A673 (cell line): ENCODE measurements at regions of chr19 and their contacts with region 1.

Region 1: GRCh38 chr19:1665565-1666047 is 13.2 kb upstream of the TCF3 start:
- DNase-seq: no peak
- H3K4me3 ChIP-seq: no peak overlapping the region
- H3K27ac ChIP-seq: no peak overlapping the region
- H3K4me1 ChIP-seq: peaks cover 21% of the 10 kb centered on the region
- H3K27me3 ChIP-seq: no peaks in the 10 kb centered on the region
- CTCF ChIP-seq: no peak

Region 2: DNA sequence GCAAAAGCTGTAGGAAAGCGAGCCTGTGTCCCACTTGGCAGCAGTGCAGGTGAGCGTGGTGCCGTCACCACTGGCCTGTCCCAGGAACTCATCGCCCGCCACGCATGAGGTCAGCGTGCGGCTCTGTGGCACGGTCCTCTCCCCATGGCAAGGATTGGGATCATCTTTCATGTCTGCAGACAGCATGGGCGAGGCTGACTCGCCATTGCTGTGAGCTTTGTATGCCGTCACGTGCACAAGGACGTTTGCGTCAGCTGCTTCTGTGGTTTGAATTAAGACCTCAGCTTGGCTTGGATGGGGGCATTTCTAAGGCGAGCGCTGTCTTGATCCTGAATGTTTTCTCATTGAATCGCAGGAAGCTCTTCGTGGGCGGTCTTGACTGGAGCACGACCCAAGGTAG is 248.5 kb before region 1 on chr19:
- CTCF ChIA-PET with region 1: no interaction called
- POLR2A ChIA-PET with region 1: no interaction called
- intact Hi-C with region 1: no loop called
- DNase-seq: no peak
- H3K4me3 ChIP-seq: no peak overlapping the region
- H3K27ac ChIP-seq: peak overlapping the region; percentile 89
- H3K4me1 ChIP-seq: peaks cover 24% of the 10 kb centered on the region
- H3K27me3 ChIP-seq: no peaks in the 10 kb centered on the region
- CTCF ChIP-seq: no peak

Region 3: GRCh38 chr19:1505991-1506881 is 159.4 kb before region 1 on chr19:
- CTCF ChIA-PET with region 1: interaction called, 11 read pairs
- POLR2A ChIA-PET with region 1: no interaction called
- intact Hi-C with region 1: no loop called
- DNase-seq: no peak
- H3K4me3 ChIP-seq: no peak overlapping the region
- H3K27ac ChIP-seq: no peak overlapping the region
- H3K4me1 ChIP-seq: peaks cover 27% of the 10 kb centered on the region
- H3K27me3 ChIP-seq: no peaks in the 10 kb centered on the region
- CTCF ChIP-seq: no peak

Region 4: GRCh38 chr19:1700002-1700732 is 34.6 kb after region 1 on chr19:
- CTCF ChIA-PET with region 1: no interaction called
- POLR2A ChIA-PET with region 1: no interaction called
- intact Hi-C with region 1: no loop called
- DNase-seq: no peak
- H3K4me3 ChIP-seq: no peak overlapping the region
- H3K27ac ChIP-seq: no peak overlapping the region
- H3K4me1 ChIP-seq: no peaks in the 10 kb centered on the region
- H3K27me3 ChIP-seq: peaks cover 25% of the 10 kb centered on the region
- CTCF ChIP-seq: no peak